Testis (tissue), 5 donors: ENCODE measurements at regions of chr14 and their contacts with region 1.

Region 1: GRCh38 chr14:58118097-58118815 is 33.8 kb downstream of the ARMH4 start:
- DNase-seq: no peak
- H3K4me3 ChIP-seq: no peak overlapping the region
- H3K27ac ChIP-seq: no peak overlapping the region
- H3K4me1 ChIP-seq: no peaks in the 10 kb centered on the region
- H3K27me3 ChIP-seq: no peaks in the 10 kb centered on the region
- CTCF ChIP-seq: no peak
- POLR2A ChIP-seq: no peak

Region 2: GRCh38 chr14:58376791-58377190 is 258.5 kb after region 1 on chr14:
- intact Hi-C with region 1: loop called (anchors 10 kb)
- DNase-seq: no peak
- H3K4me3 ChIP-seq: no peak overlapping the region
- H3K27ac ChIP-seq: no peak overlapping the region
- H3K4me1 ChIP-seq: no peaks in the 10 kb centered on the region
- H3K27me3 ChIP-seq: no peaks in the 10 kb centered on the region
- CTCF ChIP-seq: no peak
- POLR2A ChIP-seq: no peak